ENCODE measurements at regions of chr9 and their contacts with region 1.

Region 1: DNA sequence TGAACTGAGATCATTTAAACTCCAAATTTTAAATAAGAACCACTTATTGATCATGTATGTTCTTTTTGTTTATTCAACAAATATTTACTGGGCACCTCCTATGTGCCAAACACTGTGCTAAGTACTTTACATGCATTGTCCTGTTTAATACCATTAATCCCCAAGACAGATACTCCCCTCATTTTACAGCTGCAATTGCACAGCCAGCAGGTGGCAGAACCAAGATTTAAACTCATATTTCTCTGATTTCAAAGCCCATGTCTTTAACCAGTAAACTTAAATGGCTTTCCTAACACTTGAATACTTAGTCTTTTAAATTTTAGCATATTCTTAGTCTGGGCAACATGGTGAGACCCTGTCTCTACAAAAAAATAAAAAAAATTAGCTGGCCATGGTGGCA is 43.4 kb upstream of the KIAA1958 start:
- DNase-seq: no peak
- H3K4me3 ChIP-seq: no peak overlapping the region
- H3K27ac ChIP-seq: no peak overlapping the region
- H3K4me1 ChIP-seq: no peaks in the 10 kb centered on the region
- H3K27me3 ChIP-seq: no peaks in the 10 kb centered on the region
- CTCF ChIP-seq: peak; percentile 43 to 51

Region 2: DNA sequence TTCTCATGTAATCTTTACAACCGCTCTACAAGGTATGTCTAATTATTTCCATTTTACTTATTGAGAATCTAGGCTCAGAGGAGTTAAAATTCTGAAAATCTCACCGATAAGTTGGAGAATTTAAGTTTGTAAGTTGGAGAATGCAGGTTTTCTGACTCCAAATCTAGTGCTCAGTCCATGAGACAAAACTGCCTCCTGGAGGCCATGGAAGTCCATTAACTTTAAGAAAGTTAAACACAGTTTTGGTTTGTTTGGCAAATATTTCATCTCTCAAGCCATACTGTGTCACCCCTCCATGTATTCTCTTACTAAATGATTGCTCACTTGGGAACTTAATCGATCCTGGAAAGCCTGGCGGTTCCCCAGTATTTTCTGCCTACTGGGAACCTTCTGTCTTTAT is 222.1 kb after region 1 on chr9:
- CTCF ChIA-PET with region 1: no interaction called
- dilution Hi-C with region 1: no loop called
- in situ Hi-C with region 1: no loop called
- intact Hi-C with region 1: loop called (anchors 1 kb)
- DNase-seq: peak; percentile 11
- H3K4me3 ChIP-seq: no peak overlapping the region
- H3K27ac ChIP-seq: no peak overlapping the region
- H3K4me1 ChIP-seq: no peaks in the 10 kb centered on the region
- H3K27me3 ChIP-seq: no peaks in the 10 kb centered on the region
- CTCF ChIP-seq: peak; percentile 38 to 55

Region 3: GRCh38 chr9:112705768-112706427 is 262.7 kb after region 1 on chr9:
- CTCF ChIA-PET with region 1: no interaction called
- dilution Hi-C with region 1: no loop called
- in situ Hi-C with region 1: loop called in 1 of 2 experiments (anchors 10 kb)
- intact Hi-C with region 1: loop called (anchors 5 kb)
- DNase-seq: peak; percentile 21
- H3K4me3 ChIP-seq: no peak overlapping the region
- H3K27ac ChIP-seq: no peak overlapping the region
- H3K4me1 ChIP-seq: no peaks in the 10 kb centered on the region
- H3K27me3 ChIP-seq: no peaks in the 10 kb centered on the region
- CTCF ChIP-seq: peak; percentile 29 to 38

Region 4: GRCh38 chr9:113484258-113484730 is 1041.1 kb after region 1 on chr9:
- CTCF ChIA-PET with region 1: no interaction called
- dilution Hi-C with region 1: no loop called
- in situ Hi-C with region 1: no loop called
- intact Hi-C with region 1: no loop called
- DNase-seq: no peak
- H3K4me3 ChIP-seq: no peak overlapping the region
- H3K27ac ChIP-seq: no peak overlapping the region
- H3K4me1 ChIP-seq: peaks cover 3% of the 10 kb centered on the region
- H3K27me3 ChIP-seq: no peaks in the 10 kb centered on the region
- CTCF ChIP-seq: no peak

Measured in mammary epithelial cell (primary cell).